CD14-positive monocyte (primary cell): ENCODE measurements at regions of chr3 and their contacts with region 1.

Region 1: GRCh38 chr3:9731206-9732079 is at the start of gene BRPF1:
- DNase-seq: peak; percentile 99 to 100 (median 99)
- H3K4me3 ChIP-seq: peak within 1 kb of the TSS; percentile 81 to 94 (median 85)
- H3K4me3 Mint-ChIP-seq: peak within 1 kb of the TSS; percentile 87 to 95
- H3K27ac ChIP-seq: peak within 1 kb of the TSS; percentile 90 to 96
- H3K27ac Mint-ChIP-seq: peak within 1 kb of the TSS; percentile 91 to 99 (median 97)
- H3K4me1 ChIP-seq: peaks cover 50 to 59% of the 10 kb centered on the region in 2 donors
- H3K4me1 Mint-ChIP-seq: peaks cover 57% of the 10 kb centered on the region
- H3K27me3 ChIP-seq: no peaks in the 10 kb centered on the region
- H3K27me3 Mint-ChIP-seq: peaks cover 0 to 1% (median 0%) of the 10 kb centered on the region in 3 donors
- CTCF ChIP-seq: no peak
- polyA plus RNA-seq, gene BRPF1: 5.1 to 22.5 (median 10.4) TPM

Region 2: DNA sequence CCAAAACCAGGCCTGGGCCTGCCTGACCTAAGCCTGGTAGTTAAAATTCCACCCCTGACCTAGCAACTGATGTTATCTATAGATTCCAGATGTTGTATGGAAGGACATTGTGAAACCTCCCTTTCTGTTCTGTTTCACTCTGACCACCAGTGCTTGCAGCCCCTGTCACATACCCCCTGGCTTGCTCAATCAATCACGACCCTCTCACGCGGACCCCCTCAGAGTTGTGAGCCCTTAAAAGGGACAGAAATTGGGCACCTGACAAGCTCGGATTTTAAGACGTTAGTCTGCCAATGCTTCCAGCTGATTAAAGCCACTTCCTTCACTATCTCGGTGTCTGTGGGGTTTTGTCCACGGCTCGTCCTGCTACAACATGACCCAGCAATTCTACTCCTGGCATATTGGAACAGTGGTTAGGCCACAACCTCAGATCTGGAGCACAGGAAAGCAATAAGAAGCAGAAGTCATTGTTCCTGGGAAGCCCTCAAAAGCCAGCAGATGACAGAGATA is 141.1 kb before region 1 on chr3:
- intact Hi-C with region 1: no loop called
- DNase-seq: no peak
- H3K4me3 ChIP-seq: no peak overlapping the region
- H3K4me3 Mint-ChIP-seq: peak overlapping the region in 1 of 2 donors; percentile 49
- H3K27ac ChIP-seq: no peak overlapping the region
- H3K27ac Mint-ChIP-seq: no peak overlapping the region
- H3K4me1 ChIP-seq: peaks cover 0 to 2% of the 10 kb centered on the region in 2 donors
- H3K4me1 Mint-ChIP-seq: peaks cover 5% of the 10 kb centered on the region
- H3K27me3 ChIP-seq: no peaks in the 10 kb centered on the region
- H3K27me3 Mint-ChIP-seq: peaks cover 9 to 25% (median 16%) of the 10 kb centered on the region in 3 donors
- CTCF ChIP-seq: no peak

Region 3: DNA sequence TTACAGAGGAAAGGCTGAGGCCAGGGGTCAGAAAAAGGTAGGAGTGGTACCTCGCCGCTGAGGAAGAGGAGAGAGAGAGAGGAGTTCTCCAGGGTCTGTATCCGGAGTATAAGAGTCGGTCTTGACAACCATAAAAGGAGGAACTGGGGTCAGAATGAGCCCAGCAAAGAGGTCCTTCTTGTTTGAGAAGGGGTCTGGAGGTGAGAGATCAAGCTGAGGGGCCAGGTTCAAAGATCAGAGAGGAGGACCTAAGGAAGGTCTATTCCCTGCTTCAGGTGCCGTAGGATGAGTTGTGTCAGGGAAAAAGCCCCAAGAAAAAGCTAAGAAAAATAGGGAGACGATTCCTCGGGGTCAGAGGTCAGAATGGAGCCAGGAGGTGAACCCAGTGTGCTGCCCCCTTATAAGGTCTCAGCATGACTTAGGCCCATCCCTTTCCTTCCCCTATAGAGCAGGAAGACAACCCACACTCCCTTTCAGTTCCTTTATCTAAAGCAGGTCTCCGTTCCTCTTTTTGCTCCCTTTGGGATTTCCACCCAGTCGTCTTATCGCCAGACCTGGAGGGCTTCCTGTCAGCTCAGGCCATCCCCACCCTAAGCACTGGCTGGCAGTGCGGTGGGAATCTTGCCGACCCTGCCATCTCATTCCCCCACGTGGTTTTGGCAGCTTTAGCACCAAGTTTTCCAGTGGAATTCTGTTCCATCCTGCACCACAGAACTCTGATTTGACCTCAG is 81.5 kb before region 1 on chr3:
- intact Hi-C with region 1: loop called (anchors 1 to 2 kb)
- DNase-seq: peak; percentile 77 to 92 (median 87)
- H3K4me3 ChIP-seq: peak overlapping the region; percentile 94 to 99 (median 95)
- H3K4me3 Mint-ChIP-seq: peak overlapping the region; percentile 99
- H3K27ac ChIP-seq: peak overlapping the region; percentile 89 to 92
- H3K27ac Mint-ChIP-seq: peak overlapping the region; percentile 94 to 99 (median 99)
- H3K4me1 ChIP-seq: peaks cover 16 to 22% of the 10 kb centered on the region in 2 donors
- H3K4me1 Mint-ChIP-seq: peaks cover 35% of the 10 kb centered on the region
- H3K27me3 ChIP-seq: no peaks in the 10 kb centered on the region
- H3K27me3 Mint-ChIP-seq: peaks cover 0 to 1% (median 1%) of the 10 kb centered on the region in 3 donors
- CTCF ChIP-seq: no peak

Region 4: GRCh38 chr3:9749645-9750555 is 18.5 kb after region 1 on chr3 and contains the start of gene OGG1:
- intact Hi-C with region 1: loop called (anchors 1 kb)
- DNase-seq: peak; percentile 96 to 97 (median 97)
- H3K4me3 ChIP-seq: peak within 1 kb of the TSS; percentile 57 to 92 (median 80)
- H3K4me3 Mint-ChIP-seq: peak within 1 kb of the TSS; percentile 90 to 98
- H3K27ac ChIP-seq: peak within 1 kb of the TSS; percentile 84 to 89
- H3K27ac Mint-ChIP-seq: peak within 1 kb of the TSS; percentile 95 to 99 (median 96)
- H3K4me1 ChIP-seq: peaks cover 29 to 35% of the 10 kb centered on the region in 2 donors
- H3K4me1 Mint-ChIP-seq: peaks cover 37% of the 10 kb centered on the region
- H3K27me3 ChIP-seq: no peaks in the 10 kb centered on the region
- H3K27me3 Mint-ChIP-seq: peaks cover 0 to 2% (median 0%) of the 10 kb centered on the region in 3 donors
- CTCF ChIP-seq: no peak
- polyA plus RNA-seq, gene OGG1: 17.4 to 21.9 (median 20.5) TPM

Region 5: GRCh38 chr3:9779721-9780457 is 48.4 kb after region 1 on chr3:
- intact Hi-C with region 1: no loop called
- DNase-seq: peak; percentile 60 to 62 (median 61)
- H3K4me3 ChIP-seq: peak overlapping the region in 1 of 3 experiments; percentile 47
- H3K4me3 Mint-ChIP-seq: peak overlapping the region; percentile 6 to 78
- H3K27ac ChIP-seq: peak overlapping the region; percentile 80 to 91
- H3K27ac Mint-ChIP-seq: peak overlapping the region; percentile 93 to 99 (median 96)
- H3K4me1 ChIP-seq: peaks cover 61 to 63% of the 10 kb centered on the region in 2 donors
- H3K4me1 Mint-ChIP-seq: peaks cover 62% of the 10 kb centered on the region
- H3K27me3 ChIP-seq: no peaks in the 10 kb centered on the region
- H3K27me3 Mint-ChIP-seq: peaks cover 0 to 3% (median 2%) of the 10 kb centered on the region in 3 donors
- CTCF ChIP-seq: no peak

Region 6: GRCh38 chr3:9902372-9903237 is 171.2 kb after region 1 on chr3 and contains the start of gene IL17RE:
- intact Hi-C with region 1: no loop called
- DNase-seq: no peak
- H3K4me3 ChIP-seq: no peak within 1 kb of the TSS
- H3K4me3 Mint-ChIP-seq: peak within 1 kb of the TSS in 1 of 2 donors; percentile 47
- H3K27ac ChIP-seq: no peak within 1 kb of the TSS
- H3K27ac Mint-ChIP-seq: no peak within 1 kb of the TSS
- H3K4me1 ChIP-seq: peaks cover 7 to 14% of the 10 kb centered on the region in 2 donors
- H3K4me1 Mint-ChIP-seq: peaks cover 32% of the 10 kb centered on the region
- H3K27me3 ChIP-seq: no peaks in the 10 kb centered on the region
- H3K27me3 Mint-ChIP-seq: peaks cover 0 to 2% (median 0%) of the 10 kb centered on the region in 3 donors
- CTCF ChIP-seq: no peak
- polyA plus RNA-seq, gene IL17RE: 0.27 TPM in 1 of 3 donors, not detected in the others

Region 7: DNA sequence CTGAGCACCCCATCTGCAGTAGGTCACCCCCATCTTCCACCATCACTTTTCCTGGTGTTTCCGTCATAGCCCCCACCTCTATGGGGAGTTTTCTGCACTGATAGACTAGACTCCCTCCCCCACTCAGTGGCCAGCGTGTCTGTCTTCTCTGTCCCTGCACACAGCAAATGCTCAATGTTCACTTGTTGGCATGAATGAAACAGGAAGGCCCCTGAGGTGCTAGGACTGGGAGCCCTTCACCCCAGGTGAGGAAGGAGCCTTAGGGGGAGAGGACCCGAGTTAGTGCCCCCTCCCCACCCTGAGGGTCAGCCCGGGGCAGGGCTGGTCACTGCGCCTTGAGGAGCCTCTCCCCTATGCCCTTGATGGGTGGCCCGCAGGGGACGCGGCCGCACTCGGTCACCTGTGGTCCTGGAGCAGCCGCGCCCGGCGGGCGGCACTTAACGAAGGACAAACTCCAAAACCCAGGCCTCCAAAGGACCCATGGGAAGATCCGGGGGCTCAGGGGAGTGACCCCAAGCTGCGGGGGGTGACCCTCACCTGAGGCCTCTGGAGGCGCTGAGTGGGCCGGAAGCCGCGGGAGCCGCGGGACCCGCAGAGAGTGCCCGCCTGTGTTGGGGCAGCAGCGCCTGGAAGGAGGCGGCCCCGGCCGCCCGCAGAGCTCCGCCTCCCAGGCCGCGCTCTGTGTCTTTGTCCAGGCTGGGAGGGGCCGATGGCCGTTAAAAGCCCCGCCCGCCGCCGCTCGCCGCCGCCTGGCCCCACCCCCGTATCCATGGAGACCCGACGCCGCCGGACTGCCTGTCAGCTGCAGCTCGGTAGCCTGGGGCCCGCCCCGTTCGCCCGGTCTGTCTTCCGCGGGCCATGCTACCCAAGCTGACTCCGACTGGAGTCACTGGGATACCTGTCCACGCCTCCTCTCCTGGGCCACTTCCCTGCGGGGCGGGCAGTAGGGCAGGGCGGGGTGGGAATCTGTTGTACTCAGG is 279.3 kb after region 1 on chr3:
- intact Hi-C with region 1: loop called in 1 of 2 experiments (anchors 1 kb)
- DNase-seq: peak; percentile 90 to 92 (median 91)
- H3K4me3 ChIP-seq: peak overlapping the region; percentile 51 to 82 (median 55)
- H3K4me3 Mint-ChIP-seq: peak overlapping the region; percentile 68 to 82
- H3K27ac ChIP-seq: no peak overlapping the region
- H3K27ac Mint-ChIP-seq: peak overlapping the region in 3 of 7 donors; percentile 35 to 50 (median 48)
- H3K4me1 ChIP-seq: peaks cover 44 to 48% of the 10 kb centered on the region in 2 donors
- H3K4me1 Mint-ChIP-seq: peaks cover 39% of the 10 kb centered on the region
- H3K27me3 ChIP-seq: no peaks in the 10 kb centered on the region
- H3K27me3 Mint-ChIP-seq: peaks cover 0 to 7% (median 3%) of the 10 kb centered on the region in 3 donors
- CTCF ChIP-seq: no peak